ENCODE measurements at regions of chr15 and their contacts with region 1.

Region 1: DNA sequence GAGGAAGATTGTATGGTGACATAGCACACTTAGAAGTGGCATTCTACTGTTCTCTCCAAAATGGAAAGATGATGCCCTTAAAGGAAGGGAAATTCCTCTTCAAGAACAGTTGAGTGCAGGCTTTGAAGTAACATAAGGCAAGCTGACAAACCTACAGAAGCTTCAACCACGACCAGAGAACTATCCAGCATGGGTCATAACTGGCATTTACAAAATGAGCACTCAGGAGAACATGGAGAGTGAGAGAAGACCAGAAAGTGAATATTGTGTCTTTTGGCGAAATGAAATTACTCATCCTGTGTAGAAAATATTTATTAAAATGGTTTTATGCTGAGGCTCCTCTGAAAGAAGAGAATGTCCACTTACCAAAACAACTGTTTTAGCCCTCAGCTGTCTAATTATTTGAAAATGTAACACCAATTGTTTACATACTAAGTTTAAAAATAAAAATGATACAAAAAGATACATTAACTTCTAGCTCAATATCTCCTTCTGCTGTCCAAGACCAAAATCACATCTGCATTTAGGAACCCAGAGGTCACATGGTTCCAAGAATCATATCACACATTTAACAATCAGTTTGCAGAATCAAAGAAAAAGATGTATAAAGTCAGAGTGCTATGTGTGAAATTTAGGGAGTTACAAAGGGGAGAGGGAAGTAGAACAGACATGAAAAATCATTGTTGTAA is 216.9 kb downstream of the ATP8B4 start:
- DNase-seq: no peak
- ATAC-seq: no peak
- H3K4me3 ChIP-seq: no peak overlapping the region
- H3K27ac ChIP-seq: no peak overlapping the region
- H3K4me1 ChIP-seq: no peaks in the 10 kb centered on the region
- H3K27me3 ChIP-seq: no peaks in the 10 kb centered on the region
- CTCF ChIP-seq: no peak; a peak in 1 of 6 replicates
- EP300 ChIP-seq: no peak
- POLR2A ChIP-seq: no peak
- RAD21 ChIP-seq: peak; percentile 30 to 35; a peak in 3 of 4 replicates

Region 2: DNA sequence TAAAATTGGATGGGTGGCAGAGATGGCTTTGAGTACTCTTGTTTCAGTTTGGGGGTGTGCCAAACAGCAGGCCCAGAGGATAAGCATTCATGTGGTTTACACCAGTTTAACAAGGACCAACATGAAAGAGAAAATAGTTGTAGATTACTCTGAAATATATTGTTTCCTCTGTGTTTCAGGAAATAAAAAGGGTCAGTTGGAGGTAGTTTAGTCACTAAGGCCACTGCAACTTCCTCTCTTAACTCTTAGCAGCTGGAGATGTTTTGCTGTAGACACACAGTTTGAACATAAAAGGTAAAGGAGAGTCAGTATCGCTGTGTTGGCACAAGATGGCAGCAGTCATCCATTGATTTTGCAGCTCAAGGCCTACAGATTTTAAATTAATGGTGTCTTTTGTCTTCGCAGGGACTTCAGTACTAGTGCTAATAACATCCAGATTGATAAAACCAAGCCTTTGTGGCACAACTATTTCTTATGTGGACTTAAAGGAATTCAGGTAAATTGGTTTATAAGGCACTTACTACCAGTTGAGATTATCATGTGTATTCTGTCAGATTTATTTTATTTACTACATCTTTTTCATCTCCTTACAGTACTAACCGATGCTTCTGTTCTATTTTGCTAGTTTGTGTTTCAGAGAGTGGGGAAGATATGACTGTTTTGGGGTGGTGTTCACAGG is 666.6 kb before region 1 on chr15:
- CTCF ChIA-PET with region 1: no interaction called
- POLR2A ChIA-PET with region 1: no interaction called
- in situ Hi-C with region 1: no loop called
- intact Hi-C with region 1: loop called (anchors 10 kb)
- DNase-seq: peak in 2 of 4 experiments; percentile 15 to 42
- ATAC-seq: peak; percentile 80
- H3K4me3 ChIP-seq: no peak overlapping the region
- H3K27ac ChIP-seq: no peak overlapping the region
- H3K4me1 ChIP-seq: no peaks in the 10 kb centered on the region
- H3K27me3 ChIP-seq: no peaks in the 10 kb centered on the region
- CTCF ChIP-seq: peak; percentile 21 to 61 (median 51); a peak in 4 of 6 replicates
- EP300 ChIP-seq: no peak
- POLR2A ChIP-seq: no peak
- RAD21 ChIP-seq: peak; percentile 60 to 67

Region 3: DNA sequence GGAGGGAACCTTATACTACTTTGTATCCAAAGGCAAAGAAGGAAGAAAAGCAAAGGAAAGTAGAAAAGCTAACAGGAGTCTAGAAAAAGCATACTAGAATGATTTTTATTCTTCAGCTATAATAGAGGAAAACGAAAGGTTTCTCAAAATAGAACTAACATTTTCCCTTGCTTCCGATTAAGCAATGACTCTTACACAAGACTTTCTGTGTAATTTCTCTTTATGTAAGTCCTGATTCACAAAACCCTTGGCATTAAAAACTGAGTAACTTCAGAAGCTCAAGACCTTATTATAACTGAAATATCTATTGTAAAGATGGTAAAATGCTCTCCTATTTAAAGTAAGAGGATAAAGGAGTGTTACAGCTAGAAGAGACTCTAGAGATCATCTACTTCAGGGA is 183.9 kb before region 1 on chr15:
- CTCF ChIA-PET with region 1: no interaction called
- POLR2A ChIA-PET with region 1: no interaction called
- in situ Hi-C with region 1: no loop called
- intact Hi-C with region 1: no loop called
- DNase-seq: no peak
- ATAC-seq: no peak
- H3K4me3 ChIP-seq: no peak overlapping the region
- H3K27ac ChIP-seq: no peak overlapping the region
- H3K4me1 ChIP-seq: no peaks in the 10 kb centered on the region
- H3K27me3 ChIP-seq: no peaks in the 10 kb centered on the region
- CTCF ChIP-seq: no peak
- EP300 ChIP-seq: no peak
- POLR2A ChIP-seq: no peak
- RAD21 ChIP-seq: no peak

Region 4: DNA sequence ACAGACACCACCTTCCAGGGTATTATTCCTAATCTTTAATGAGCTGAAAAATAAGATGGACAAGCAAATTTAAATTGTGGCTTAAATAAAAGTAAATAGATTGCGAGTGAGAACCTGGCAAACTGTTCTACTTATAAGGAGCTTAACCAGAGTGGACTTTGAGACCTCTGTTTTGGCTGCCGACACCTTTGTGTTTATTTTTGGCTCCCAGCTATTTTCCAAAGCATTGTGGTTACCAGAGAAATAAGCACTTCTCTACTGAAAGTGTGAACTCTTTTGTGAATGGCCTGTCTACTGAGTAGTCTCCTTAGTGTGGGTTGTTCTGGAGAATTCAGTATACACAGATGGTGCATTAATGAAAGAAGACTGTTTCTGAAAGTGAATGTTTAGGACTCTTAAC is 107.5 kb after region 1 on chr15:
- CTCF ChIA-PET with region 1: no interaction called
- POLR2A ChIA-PET with region 1: no interaction called
- in situ Hi-C with region 1: no loop called
- intact Hi-C with region 1: no loop called
- DNase-seq: no peak
- ATAC-seq: no peak
- H3K4me3 ChIP-seq: no peak overlapping the region
- H3K27ac ChIP-seq: no peak overlapping the region
- H3K4me1 ChIP-seq: no peaks in the 10 kb centered on the region
- H3K27me3 ChIP-seq: no peaks in the 10 kb centered on the region; a peak in 1 of 5 replicates
- CTCF ChIP-seq: no peak
- EP300 ChIP-seq: no peak
- POLR2A ChIP-seq: no peak
- RAD21 ChIP-seq: no peak